Cardiac septum (tissue), 1 donor: ENCODE measurements at regions of chr5 and their contacts with region 1.

Region 1: DNA sequence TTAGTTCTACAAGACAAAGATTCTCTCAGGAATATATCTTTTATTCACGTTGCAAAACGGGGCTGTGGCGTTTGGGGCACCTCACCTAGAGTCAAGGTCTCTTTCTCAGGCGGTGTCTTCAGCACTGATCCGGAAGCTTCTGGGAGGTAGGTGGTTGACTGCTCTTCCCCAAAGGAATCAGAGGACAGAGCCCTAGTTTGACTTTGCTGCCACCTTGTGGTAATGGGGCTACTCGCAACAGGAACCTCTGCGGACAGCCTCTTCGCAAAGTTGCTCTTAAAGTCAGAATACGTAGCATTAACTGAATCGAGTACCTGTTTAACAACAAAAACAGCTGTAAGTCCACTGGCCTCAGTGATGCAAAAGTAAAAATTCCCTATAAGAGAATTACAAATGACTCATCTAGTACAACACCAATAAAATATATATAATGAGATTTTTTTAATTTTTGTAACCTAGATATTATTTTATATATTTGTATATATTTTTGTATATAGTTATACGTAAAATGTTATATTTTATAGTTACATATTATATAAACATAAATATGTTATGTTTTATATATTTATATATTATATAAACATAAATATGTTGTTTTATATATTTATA is 13.3 kb upstream of the GPX8 start:
- DNase-seq: peak; percentile 84

Region 2: GRCh38 chr5:54909911-54910870 is 236.5 kb before region 1 on chr5:
- intact Hi-C with region 1: loop called (anchors 2 kb)
- DNase-seq: no peak

Region 3: DNA sequence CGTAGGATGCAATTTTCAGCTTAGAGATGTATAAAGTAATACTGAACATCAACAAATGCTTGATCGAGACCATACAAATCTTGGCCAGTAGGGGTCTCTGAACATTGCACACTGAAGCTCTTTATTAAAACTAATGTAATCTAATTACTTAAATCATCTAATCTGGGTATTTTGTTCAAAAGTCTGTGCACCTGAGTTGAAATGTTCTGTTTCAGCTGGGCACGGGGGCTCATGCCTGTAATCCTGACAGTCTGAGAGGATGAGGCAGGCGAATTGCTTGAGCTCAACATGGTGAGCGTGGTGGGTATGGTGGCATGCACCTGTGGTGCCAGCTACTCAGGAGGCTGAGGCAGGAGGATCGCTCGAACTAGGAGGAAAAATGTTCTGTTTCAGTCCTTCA is 202.3 kb before region 1 on chr5:
- intact Hi-C with region 1: loop called (anchors 5 kb)
- DNase-seq: no peak